Common myeloid progenitor, CD34-positive (primary cell): ENCODE measurements at regions of chr13 and their contacts with region 1.

Region 1: DNA sequence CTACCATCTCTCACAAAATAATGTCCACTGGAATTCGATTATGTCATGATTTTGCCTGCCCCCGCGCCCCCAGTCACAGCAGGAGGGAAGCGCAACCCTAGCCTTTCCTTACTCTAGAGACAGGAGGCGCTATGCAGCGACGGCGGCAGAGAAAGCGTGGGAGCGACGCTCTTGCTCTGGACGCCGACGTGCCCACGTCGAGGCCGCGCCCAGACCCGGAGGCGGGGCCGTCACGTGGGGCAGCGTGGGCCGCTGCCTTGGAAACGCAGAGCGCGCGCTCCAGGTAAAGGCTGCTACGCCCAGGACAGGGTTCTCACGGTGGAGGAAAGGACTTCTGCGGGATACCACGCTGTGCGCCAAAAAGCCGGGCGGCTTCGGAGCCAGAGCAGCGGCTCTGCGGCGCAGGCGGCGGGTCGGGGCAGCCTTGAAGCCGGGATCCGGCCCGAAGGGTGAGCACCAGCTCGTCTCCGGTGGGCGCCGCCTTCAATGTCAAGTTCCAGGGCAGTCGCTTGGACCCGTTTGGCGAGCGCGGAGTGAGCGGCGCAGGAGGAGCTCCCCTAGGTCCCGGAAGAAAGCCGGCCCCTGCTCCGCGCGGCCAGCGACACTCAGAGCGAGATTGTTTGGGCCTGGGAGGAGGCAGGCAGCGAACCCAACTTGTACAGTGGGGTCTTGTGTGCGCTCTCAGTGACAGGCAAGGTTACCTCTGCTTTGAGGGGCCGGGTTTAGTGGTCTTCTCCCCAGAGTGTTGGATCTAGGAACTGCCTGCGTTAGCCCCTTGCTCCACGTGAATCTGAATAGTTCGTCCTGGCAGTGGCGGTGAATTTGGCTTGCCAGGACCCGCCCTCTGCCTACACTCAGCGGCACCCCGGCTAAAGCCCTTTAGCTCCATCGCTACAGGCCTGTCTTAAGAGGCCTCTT is 121.7 kb downstream of the MRPL57 start:
- DNase-seq: peak; percentile 91 to 94 (median 93)
- H3K4me3 ChIP-seq: peak overlapping the region; percentile 77 to 98 (median 94)
- H3K27ac ChIP-seq: peak overlapping the region; percentile 58 to 83
- H3K4me1 ChIP-seq: peaks cover 7 to 24% (median 19%) of the 10 kb centered on the region in 4 experiments
- H3K27me3 ChIP-seq: no peaks in the 10 kb centered on the region

Region 2: DNA sequence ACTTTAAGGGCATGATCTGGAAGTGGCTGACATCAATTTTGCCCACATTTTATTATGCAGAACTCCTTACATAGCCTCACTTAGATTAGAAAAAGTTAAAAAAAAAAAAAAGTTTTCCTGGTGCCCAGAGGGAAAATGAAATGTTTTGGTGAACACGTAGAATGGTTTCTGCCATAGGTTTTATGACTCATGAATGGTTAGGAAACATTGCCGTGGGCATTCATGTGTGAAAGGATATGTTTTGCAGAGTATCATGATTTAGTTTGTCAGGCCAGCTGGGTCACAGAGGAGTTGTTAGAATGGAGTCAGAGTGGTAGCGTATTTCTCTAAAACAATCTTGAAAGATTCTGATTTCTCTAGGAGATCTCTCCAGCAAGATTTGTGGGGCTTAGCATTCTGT is 12.0 kb after region 1 on chr13:
- CTCF ChIA-PET with region 1: interaction called, 12 read pairs
- POLR2A ChIA-PET with region 1: interaction called, 12 read pairs
- DNase-seq: no peak
- H3K4me3 ChIP-seq: no peak overlapping the region
- H3K27ac ChIP-seq: no peak overlapping the region
- H3K4me1 ChIP-seq: no peaks in the 10 kb centered on the region
- H3K27me3 ChIP-seq: no peaks in the 10 kb centered on the region